AG04450 (cell line): ENCODE measurements at regions of chr11 and their contacts with region 1.

Region 1: GRCh38 chr11:134139873-134140331 is 71.0 kb downstream of the JAM3 start:
- DNase-seq: peak; percentile 64
- H3K4me3 ChIP-seq: no peak overlapping the region
- H3K27ac ChIP-seq: no peak overlapping the region
- H3K27me3 ChIP-seq: no peaks in the 10 kb centered on the region
- CTCF ChIP-seq: peak; percentile 91

Region 2: DNA sequence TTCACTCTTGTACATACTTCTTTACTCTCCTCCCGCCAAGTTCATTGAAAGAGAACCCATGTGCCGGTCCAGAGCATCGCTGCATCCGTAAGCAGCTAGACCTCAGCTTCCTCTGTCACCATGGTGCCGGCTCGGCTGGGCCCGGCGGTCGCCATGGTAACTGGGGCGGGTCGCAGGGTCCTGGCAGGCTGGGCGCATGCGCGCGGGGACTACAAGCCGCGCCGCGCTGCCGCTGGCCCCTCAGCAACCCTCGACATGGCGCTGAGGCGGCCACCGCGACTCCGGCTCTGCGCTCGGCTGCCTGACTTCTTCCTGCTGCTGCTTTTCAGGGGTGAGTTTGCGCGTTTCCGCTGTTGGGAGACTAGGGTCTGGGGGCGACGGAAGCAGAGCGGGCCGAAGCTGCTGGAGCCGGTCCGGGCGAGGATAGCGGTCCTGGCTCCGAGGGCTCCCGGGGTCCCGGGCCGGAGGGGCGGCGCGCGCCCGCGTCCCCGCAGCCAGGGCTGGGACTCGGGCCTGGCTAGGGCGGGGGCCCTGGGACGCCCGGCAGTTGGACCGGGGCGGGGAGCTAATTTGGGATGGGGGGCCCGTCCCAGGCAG is 71.0 kb before region 1 on chr11 and contains the start of gene JAM3:
- CTCF ChIA-PET with region 1: interaction called, 25 read pairs
- POLR2A ChIA-PET with region 1: no interaction called
- DNase-seq: peak; percentile 76
- H3K4me3 ChIP-seq: peak within 1 kb of the TSS; percentile 86
- H3K27ac ChIP-seq: peak within 1 kb of the TSS; percentile 31
- H3K27me3 ChIP-seq: peaks cover 14% of the 10 kb centered on the region
- CTCF ChIP-seq: no peak
- polyA plus RNA-seq, gene JAM3: 66.2 and 79.6 TPM in 2 replicates

Region 3: DNA sequence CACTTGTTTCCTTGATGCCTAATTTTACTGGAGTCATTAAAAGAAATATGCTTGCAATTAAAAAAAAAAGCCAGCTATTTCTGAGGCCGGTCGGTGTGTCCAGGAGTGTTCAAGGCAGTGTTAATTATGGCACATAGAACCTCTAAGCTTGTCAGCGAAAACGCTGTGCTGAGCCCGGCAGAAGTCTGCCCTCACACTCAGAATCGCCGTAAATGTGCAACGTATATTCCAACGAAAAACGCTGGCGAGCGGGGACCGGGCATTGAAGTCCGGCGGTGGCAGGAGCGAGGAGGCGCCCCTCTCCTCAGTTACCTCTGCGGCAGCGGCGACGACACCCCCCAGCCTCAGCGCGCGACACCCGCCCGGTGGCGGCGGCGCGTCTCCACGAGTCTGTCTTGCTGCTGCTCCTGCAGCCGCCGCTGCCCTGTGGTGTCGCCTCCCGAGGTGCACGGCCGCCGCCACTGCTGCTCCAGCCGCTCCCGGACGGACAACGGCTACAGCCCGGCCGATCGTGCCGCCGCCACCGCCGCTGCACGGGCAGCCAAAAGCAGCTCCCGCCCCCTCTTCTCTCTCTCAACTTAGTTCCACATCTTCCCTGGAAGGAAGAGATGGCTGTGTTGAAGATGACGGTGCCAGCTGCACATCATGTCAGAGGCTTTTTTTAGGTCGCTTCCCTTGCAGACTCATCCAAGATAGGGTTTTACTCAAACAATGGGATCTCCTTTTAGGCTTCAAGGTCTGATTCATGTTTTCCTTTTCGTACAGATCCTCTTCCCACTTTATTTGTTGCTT is 15.0 kb before region 1 on chr11:
- CTCF ChIA-PET with region 1: interaction called, 21 read pairs
- POLR2A ChIA-PET with region 1: no interaction called
- DNase-seq: no peak
- H3K4me3 ChIP-seq: peak overlapping the region; percentile 58
- H3K27ac ChIP-seq: peak overlapping the region; percentile 74
- H3K27me3 ChIP-seq: no peaks in the 10 kb centered on the region
- CTCF ChIP-seq: no peak

Region 4: GRCh38 chr11:134150195-134150903 is 10.4 kb after region 1 on chr11:
- CTCF ChIA-PET with region 1: interaction called, 14 read pairs
- POLR2A ChIA-PET with region 1: no interaction called
- DNase-seq: no peak
- H3K4me3 ChIP-seq: no peak overlapping the region
- H3K27ac ChIP-seq: peak overlapping the region; percentile 11
- H3K27me3 ChIP-seq: no peaks in the 10 kb centered on the region
- CTCF ChIP-seq: no peak